ENCODE measurements at regions of chr11 and their contacts with region 1.

Region 1: GRCh38 chr11:61384271-61385242 is 7.8 kb upstream of the TMEM216 start:
- DNase-seq: no peak
- ATAC-seq: no peak
- H3K4me3 Mint-ChIP-seq: no peak overlapping the region
- H3K27ac Mint-ChIP-seq: no peak overlapping the region
- H3K4me1 Mint-ChIP-seq: peaks cover 4% of the 10 kb centered on the region
- H3K27me3 Mint-ChIP-seq: no peaks in the 10 kb centered on the region
- CTCF ChIP-seq: no peak

Region 2: DNA sequence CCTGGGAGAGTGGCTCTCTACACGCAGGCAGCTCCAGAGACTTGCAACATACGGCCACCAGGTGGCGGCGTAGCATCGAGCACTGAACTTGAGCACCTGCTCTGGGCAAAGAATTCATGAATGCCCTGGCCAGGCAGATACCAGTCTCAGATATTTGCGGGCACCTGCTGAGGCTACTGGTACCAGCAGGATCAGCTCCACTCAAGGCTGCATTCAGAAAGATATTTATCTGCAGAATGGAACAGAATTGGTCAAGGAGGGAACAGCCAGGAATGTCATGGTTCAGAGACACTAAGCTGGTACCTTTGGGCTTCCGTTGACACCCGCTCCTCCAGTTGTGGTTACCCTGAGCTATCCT is 553.4 kb before region 1 on chr11:
- CTCF ChIA-PET with region 1: interaction called, 11 read pairs
- POLR2A ChIA-PET with region 1: no interaction called
- intact Hi-C with region 1: no loop called
- DNase-seq: peak; percentile 90
- ATAC-seq: peak; percentile 95
- H3K4me3 Mint-ChIP-seq: no peak overlapping the region
- H3K27ac Mint-ChIP-seq: no peak overlapping the region
- H3K4me1 Mint-ChIP-seq: peaks cover 2% of the 10 kb centered on the region
- H3K27me3 Mint-ChIP-seq: peaks cover 1% of the 10 kb centered on the region
- CTCF ChIP-seq: peak; percentile 91

Region 3: DNA sequence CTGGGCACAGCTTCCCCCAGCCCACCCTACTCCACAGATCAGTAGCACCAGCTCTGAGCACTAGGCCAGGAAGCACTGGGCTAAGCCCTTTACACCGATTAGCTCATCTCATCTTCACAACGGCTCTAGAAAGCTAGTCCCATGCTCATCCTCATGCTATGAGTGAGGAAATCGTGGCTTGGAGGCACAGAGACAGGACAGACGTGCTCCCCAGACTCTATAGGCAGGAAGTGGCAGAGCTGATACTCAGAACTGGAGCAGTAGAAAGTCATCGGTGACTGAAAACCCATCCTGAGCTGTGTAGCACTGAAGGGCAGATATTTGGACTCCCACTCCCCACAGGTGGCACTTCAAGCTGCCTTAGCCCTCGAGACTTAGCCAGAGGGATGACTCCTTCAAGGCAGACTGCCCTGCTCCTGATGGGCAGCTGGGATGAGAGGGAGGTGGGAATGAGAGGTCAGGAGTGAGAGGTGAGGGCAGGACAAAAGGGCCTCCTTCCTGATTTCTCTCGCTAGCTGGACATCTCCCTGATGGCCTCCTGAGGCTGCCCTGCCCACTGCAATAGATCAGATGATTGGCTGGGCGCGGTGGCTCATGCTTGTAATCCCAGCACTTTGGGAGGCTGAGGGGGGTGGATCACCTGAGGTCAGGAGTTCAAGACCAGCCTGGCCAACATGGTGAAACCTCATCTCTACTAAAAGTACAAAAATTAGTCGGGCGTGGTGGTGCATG is 272.6 kb before region 1 on chr11:
- CTCF ChIA-PET with region 1: no interaction called
- POLR2A ChIA-PET with region 1: no interaction called
- intact Hi-C with region 1: no loop called
- DNase-seq: peak; percentile 87
- ATAC-seq: peak; percentile 91
- H3K4me3 Mint-ChIP-seq: peak overlapping the region; percentile 68
- H3K27ac Mint-ChIP-seq: peak overlapping the region; percentile 85
- H3K4me1 Mint-ChIP-seq: peaks cover 95% of the 10 kb centered on the region
- H3K27me3 Mint-ChIP-seq: no peaks in the 10 kb centered on the region
- CTCF ChIP-seq: no peak

Region 4: GRCh38 chr11:61161190-61162091 is 223.1 kb before region 1 on chr11 and contains the start of gene VPS37C:
- CTCF ChIA-PET with region 1: no interaction called
- POLR2A ChIA-PET with region 1: no interaction called
- intact Hi-C with region 1: no loop called
- DNase-seq: peak; percentile 94
- ATAC-seq: peak; percentile 81
- H3K4me3 Mint-ChIP-seq: peak within 1 kb of the TSS; percentile 89
- H3K27ac Mint-ChIP-seq: peak within 1 kb of the TSS; percentile 91
- H3K4me1 Mint-ChIP-seq: peaks cover 56% of the 10 kb centered on the region
- H3K27me3 Mint-ChIP-seq: no peaks in the 10 kb centered on the region
- CTCF ChIP-seq: no peak
- total RNA-seq, gene VPS37C: 6.6 to 7.2 TPM

Region 5: GRCh38 chr11:61266602-61267001 is 118.0 kb before region 1 on chr11:
- CTCF ChIA-PET with region 1: interaction called, 12 read pairs
- POLR2A ChIA-PET with region 1: no interaction called
- intact Hi-C with region 1: no loop called
- DNase-seq: no peak
- ATAC-seq: no peak
- H3K4me3 Mint-ChIP-seq: no peak overlapping the region
- H3K27ac Mint-ChIP-seq: no peak overlapping the region
- H3K4me1 Mint-ChIP-seq: no peaks in the 10 kb centered on the region
- H3K27me3 Mint-ChIP-seq: no peaks in the 10 kb centered on the region
- CTCF ChIP-seq: no peak

Region 6: DNA sequence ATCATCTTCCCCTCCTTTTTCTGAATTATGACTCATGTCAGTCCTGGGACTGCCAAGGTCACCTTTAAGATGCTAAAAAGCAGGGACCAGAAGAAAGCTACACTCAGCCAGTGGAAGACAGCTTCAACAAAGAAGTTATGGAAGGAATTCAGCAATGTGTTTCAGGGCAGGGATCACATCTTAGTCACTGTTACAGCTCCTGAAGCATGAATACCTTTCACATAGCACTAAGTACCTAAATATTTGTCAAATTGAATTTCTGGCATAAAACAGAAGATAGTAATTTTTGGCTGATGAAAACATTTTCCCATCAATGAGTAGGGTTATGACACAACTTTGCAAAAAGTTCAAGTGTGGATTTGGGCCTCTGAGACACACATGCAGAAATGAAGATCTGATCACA is 56.9 kb before region 1 on chr11:
- CTCF ChIA-PET with region 1: interaction called, 313 read pairs
- POLR2A ChIA-PET with region 1: no interaction called
- intact Hi-C with region 1: no loop called
- DNase-seq: no peak
- ATAC-seq: no peak
- H3K4me3 Mint-ChIP-seq: no peak overlapping the region
- H3K27ac Mint-ChIP-seq: peak overlapping the region; percentile 22
- H3K4me1 Mint-ChIP-seq: peaks cover 46% of the 10 kb centered on the region
- H3K27me3 Mint-ChIP-seq: no peaks in the 10 kb centered on the region
- CTCF ChIP-seq: no peak

Region 7: GRCh38 chr11:61342207-61342803 is 42.3 kb before region 1 on chr11:
- CTCF ChIA-PET with region 1: interaction called, 313 read pairs
- POLR2A ChIA-PET with region 1: interaction called, 3 read pairs
- intact Hi-C with region 1: no loop called
- DNase-seq: no peak
- ATAC-seq: no peak
- H3K4me3 Mint-ChIP-seq: no peak overlapping the region
- H3K27ac Mint-ChIP-seq: no peak overlapping the region
- H3K4me1 Mint-ChIP-seq: no peaks in the 10 kb centered on the region
- H3K27me3 Mint-ChIP-seq: no peaks in the 10 kb centered on the region
- CTCF ChIP-seq: no peak

Region 8: GRCh38 chr11:61361686-61362541 is 22.6 kb before region 1 on chr11 and contains the starts of genes CYB561A3 and TMEM138:
- CTCF ChIA-PET with region 1: interaction called, 86 read pairs
- POLR2A ChIA-PET with region 1: interaction called, 16 read pairs
- intact Hi-C with region 1: no loop called
- DNase-seq: peak; percentile 96
- ATAC-seq: peak; percentile 96
- H3K4me3 Mint-ChIP-seq: peak within 1 kb of the TSS; percentile 99
- H3K27ac Mint-ChIP-seq: peak within 1 kb of the TSS; percentile 99
- H3K4me1 Mint-ChIP-seq: peaks cover 35% of the 10 kb centered on the region
- H3K27me3 Mint-ChIP-seq: no peaks in the 10 kb centered on the region
- CTCF ChIP-seq: no peak
- total RNA-seq, gene CYB561A3: 32.4 to 33.5 TPM
- total RNA-seq, gene TMEM138: 38.6 to 47.0 TPM

Region 9: DNA sequence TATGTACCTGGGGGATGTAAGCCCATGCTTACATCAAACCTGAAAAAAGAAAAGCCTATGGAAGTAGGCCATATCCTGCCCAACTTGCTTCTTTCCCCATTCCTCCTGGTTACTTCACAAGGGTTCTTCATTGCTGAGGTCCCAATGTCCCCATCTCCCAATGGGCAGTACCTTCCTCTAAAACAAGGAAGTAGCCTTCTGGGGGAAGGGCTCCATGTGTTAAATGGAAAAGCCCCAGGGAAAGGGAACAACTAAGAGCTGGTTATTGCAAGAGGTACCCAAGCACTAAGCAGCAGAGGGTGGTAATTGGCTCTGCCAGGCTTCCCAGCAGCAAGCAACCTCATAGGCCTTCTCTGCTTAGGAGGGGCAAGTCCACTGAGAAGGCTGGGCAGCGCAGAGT is 19.1 kb after region 1 on chr11:
- CTCF ChIA-PET with region 1: interaction called, 43 read pairs
- POLR2A ChIA-PET with region 1: interaction called, 4 read pairs
- intact Hi-C with region 1: no loop called
- DNase-seq: no peak
- ATAC-seq: no peak
- H3K4me3 Mint-ChIP-seq: no peak overlapping the region
- H3K27ac Mint-ChIP-seq: no peak overlapping the region
- H3K4me1 Mint-ChIP-seq: peaks cover 1% of the 10 kb centered on the region
- H3K27me3 Mint-ChIP-seq: no peaks in the 10 kb centered on the region
- CTCF ChIP-seq: no peak

Region 10: DNA sequence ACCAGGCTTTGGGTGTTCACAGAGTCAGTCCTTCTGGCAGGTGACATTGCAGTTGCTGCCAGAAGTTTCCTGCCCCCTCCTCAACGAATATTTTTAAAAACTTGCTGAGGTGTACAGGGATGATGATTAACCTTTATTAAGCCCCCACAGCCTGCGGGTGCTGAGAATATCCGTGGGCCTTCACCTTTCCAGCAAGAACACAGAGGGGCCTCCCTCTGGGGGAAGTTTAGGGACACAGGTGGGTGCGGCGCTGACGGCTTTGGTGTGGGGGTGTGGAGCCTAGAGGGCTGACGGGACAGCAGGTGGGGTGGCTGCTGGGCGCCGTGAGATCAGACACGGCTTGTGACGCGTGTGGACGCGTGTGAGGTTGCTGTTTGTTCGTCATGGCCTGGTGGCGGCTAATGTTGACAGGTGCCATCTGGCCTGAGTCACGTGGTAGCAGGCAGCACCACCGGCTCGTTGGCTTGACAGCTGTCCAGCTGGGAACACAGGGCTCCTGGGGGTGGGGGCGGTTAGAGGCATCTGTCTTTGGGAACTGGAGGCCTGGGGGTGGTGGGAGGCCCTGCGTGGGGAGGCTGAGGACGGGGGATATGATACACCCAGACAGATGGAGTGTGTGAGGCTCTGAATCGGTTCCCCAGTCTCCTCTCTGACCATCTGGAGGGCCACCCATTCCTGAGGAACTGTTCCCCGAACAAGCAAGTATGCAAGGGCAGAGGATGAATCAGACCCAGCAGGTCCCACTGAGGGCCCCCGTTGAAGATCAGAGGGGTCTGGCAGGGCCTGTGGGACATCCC is 111.4 kb after region 1 on chr11:
- CTCF ChIA-PET with region 1: no interaction called
- POLR2A ChIA-PET with region 1: no interaction called
- intact Hi-C with region 1: no loop called
- DNase-seq: no peak
- ATAC-seq: no peak
- H3K4me3 Mint-ChIP-seq: no peak overlapping the region
- H3K27ac Mint-ChIP-seq: no peak overlapping the region
- H3K4me1 Mint-ChIP-seq: no peaks in the 10 kb centered on the region
- H3K27me3 Mint-ChIP-seq: peaks cover 1% of the 10 kb centered on the region
- CTCF ChIP-seq: no peak

Measured in activated CD8-positive, alpha-beta T cell treated with anti-CD3 and anti-CD28 coated beads for 36 hours (primary cell).